Adrenal gland (tissue), 19 donors: ENCODE measurements at regions of chr19 and their contacts with region 1.

Region 1: GRCh38 chr19:58274771-58275199 is 4.0 kb upstream of the ZNF8 start:
- DNase-seq: no peak
- H3K4me3 ChIP-seq: no peak overlapping the region
- H3K27ac ChIP-seq: no peak overlapping the region
- H3K4me1 ChIP-seq: peaks cover 4% of the 10 kb centered on the region in 2 donors
- H3K27me3 ChIP-seq: no peaks in the 10 kb centered on the region
- CTCF ChIP-seq: no peak
- POLR2A ChIP-seq: no peak

Region 2: DNA sequence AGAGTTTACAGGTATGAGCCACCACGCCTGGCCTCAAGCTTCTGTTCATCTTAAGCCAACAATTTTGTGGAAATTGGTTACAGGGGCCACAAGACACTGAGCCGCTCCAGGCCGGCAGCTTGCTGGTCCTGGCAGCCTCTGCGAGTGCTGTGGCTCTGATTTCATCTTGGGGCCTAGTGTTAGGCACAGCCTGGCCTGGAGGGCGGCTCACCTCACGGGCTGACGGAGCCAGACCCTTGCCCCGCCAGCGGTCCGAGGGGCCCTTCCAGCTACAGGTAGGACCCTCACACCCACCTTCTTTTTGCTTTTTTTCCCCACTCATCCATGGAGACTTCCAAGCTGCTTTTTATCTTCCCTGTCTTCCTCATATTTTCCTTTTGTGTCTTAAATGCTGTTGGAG is 37.5 kb before region 1 on chr19:
- intact Hi-C with region 1: loop called in 1 of 2 experiments (anchors 5 kb)
- DNase-seq: no peak
- H3K4me3 ChIP-seq: no peak overlapping the region
- H3K27ac ChIP-seq: no peak overlapping the region
- H3K4me1 ChIP-seq: no peaks in the 10 kb centered on the region
- H3K27me3 ChIP-seq: no peaks in the 10 kb centered on the region
- CTCF ChIP-seq: no peak
- POLR2A ChIP-seq: no peak

Region 3: GRCh38 chr19:58372311-58373133 is 97.7 kb after region 1 on chr19:
- intact Hi-C with region 1: no loop called
- DNase-seq: peak in 1 of 7 donors; percentile 32
- H3K4me3 ChIP-seq: no peak overlapping the region
- H3K27ac ChIP-seq: no peak overlapping the region
- H3K4me1 ChIP-seq: no peaks in the 10 kb centered on the region
- H3K27me3 ChIP-seq: no peaks in the 10 kb centered on the region
- CTCF ChIP-seq: peak in 2 of 6 experiments; percentile 9 to 12
- POLR2A ChIP-seq: no peak